Left colon (tissue), 2 donors: ENCODE measurements at regions of chr3 and their contacts with region 1.

Region 1: GRCh38 chr3:124730129-124730940 is at the start of gene UMPS:
- DNase-seq: peak; percentile 93 to 97
- ATAC-seq: peak; percentile 97
- total RNA-seq, gene UMPS: 23.1 to 25.3 TPM

Region 2: GRCh38 chr3:124467980-124468902 is 262.1 kb before region 1 on chr3:
- intact Hi-C with region 1: no loop called
- DNase-seq: peak in 1 of 2 donors; percentile 47
- ATAC-seq: peak; percentile 93

Region 3: DNA sequence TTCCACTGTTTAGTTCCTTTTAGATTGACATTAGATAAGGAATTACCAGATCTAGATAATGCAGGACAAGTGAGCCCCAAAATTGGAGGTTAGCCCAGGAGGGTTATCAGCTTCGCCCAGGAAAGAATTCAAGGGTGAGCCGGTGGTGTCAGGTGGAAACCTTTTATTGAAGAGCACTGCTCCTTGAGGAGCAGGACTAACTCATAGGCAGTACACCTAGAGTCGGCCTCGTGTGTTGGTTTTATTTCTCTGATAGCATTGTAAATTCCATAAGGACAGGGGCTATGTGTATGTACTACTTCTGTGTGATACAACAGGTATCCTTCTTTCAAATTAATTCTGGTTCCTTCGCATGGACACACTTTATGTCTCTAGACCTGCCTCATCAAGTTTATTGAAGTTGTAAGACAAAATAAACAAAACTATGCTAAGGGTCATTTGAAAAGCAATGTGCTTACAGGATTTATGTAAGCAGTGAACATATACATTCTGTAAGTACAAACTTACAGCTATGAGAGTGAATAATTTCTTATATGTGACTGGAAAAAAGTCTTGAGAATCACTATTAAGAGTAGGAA is 732.5 kb after region 1 on chr3:
- intact Hi-C with region 1: loop called in 1 of 2 experiments (anchors 10 kb)
- DNase-seq: peak in 1 of 2 donors; percentile 29
- ATAC-seq: peak; percentile 81